Right ventricle myocardium inferior (tissue), 1 donor: ENCODE measurements at regions of chr3 and their contacts with region 1.

Region 1: GRCh38 chr3:179653096-179653797 is 407 bp downstream of the USP13 start:
- DNase-seq: peak; percentile 87
- ATAC-seq: peak; percentile 82

Region 2: DNA sequence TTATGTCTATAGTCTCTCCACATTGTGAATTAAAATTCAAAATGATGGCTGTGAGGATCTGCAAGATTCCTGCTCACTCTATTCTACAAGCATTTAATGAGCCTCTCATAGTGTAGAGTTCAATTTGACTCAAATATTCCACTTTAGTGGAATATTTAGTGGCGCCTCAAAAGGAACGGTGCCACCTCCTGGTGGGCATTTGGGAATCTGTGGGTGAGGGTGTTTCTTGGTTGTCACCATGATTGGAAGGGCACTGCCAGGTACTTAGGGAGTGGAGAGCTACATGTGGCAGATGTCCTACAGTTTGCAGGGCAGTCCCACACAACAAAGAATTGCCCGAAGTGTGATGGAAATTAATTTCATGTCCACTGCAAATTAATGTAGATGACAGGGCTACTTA is 380.9 kb before region 1 on chr3:
- intact Hi-C with region 1: no loop called
- DNase-seq: no peak
- ATAC-seq: no peak

Region 3: DNA sequence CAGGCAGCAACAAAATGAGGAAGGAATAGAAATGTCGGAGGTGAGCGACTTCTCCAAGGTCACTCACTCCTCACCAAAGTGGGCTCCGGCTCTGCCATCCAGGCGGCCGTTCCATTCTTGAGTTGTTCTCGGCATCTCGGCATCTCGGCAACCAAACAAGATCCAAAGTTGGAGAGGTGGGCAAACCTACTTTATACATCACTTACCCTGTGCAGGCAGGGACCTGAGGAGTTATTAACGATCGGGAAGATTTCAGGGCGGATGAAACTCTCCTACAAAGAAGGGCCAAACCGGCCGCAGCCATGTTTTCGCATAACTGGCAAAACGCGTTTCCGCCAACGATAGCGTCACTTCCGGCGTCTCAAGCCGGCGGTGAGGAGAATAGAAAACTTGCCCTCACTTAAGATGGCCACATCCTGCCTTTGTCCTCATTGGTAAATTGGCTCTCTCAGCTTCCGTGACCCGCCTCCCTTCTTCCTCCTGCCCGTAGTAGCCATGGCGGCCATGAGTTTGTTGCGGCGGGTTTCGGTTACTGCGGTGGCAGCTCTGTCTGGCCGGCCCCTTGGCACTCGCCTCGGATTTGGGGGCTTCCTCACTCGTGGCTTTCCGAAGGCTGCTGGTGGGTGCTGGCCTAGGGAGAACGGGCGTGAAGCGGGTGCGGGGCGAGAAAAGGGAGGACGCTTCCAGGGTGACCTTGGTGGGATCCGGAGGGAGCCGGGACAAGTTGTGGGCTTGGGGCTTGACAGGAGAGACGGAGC is 48.7 kb before region 1 on chr3 and contains the starts of genes MRPL47 and NDUFB5:
- intact Hi-C with region 1: loop called (anchors 2 kb)
- DNase-seq: peak; percentile 98
- ATAC-seq: peak; percentile 100
- total RNA-seq, gene MRPL47: 44.4 TPM
- total RNA-seq, gene NDUFB5: 365 TPM

Region 4: GRCh38 chr3:179681492-179682249 is 28.4 kb after region 1 on chr3:
- intact Hi-C with region 1: loop called (anchors 1 kb)
- DNase-seq: no peak
- ATAC-seq: no peak

Region 5: GRCh38 chr3:179713643-179714090 is 60.4 kb after region 1 on chr3:
- intact Hi-C with region 1: loop called (anchors 2 kb)
- DNase-seq: no peak
- ATAC-seq: peak; percentile 49

Region 6: DNA sequence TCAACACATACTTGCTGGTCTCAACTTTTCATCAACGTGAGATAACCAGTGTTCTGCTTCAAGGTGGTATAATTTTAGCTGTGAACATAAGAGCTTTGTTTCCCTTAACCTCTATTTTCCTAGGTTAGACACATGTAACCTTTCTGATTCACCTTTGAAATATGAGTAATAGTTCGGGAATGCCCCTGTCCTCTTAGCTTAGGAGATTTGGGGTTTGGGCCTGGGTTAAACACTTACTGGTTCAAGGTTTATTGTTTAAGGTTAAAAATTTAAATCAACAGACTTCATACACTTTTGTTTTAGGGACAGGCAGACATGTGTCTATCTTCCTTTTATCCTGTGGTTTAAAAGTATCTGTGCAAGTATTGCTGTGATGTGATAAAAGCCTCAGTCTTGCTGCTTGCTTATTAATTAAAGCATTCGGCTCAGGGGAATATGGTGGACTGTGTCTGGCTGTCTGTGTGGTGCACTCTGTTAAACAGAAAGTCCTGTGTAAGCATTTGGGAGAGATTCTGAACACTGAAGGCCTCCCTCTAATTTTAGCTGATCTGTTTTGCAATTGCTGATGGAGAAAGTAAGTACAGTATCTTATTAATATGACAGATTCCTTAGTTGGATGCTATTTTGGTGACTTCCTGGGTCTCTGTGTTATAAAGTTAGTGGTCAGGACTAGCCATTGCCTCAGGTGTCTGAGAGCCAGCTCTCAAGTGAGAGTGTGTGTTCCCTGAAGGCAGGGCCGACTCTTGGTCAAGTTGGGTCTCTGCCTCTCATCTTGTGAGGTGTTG is 81.4 kb after region 1 on chr3:
- intact Hi-C with region 1: loop called (anchors 2 kb)
- DNase-seq: no peak
- ATAC-seq: peak; percentile 38